ENCODE measurements at regions of chr11 and their contacts with region 1.

Region 1: DNA sequence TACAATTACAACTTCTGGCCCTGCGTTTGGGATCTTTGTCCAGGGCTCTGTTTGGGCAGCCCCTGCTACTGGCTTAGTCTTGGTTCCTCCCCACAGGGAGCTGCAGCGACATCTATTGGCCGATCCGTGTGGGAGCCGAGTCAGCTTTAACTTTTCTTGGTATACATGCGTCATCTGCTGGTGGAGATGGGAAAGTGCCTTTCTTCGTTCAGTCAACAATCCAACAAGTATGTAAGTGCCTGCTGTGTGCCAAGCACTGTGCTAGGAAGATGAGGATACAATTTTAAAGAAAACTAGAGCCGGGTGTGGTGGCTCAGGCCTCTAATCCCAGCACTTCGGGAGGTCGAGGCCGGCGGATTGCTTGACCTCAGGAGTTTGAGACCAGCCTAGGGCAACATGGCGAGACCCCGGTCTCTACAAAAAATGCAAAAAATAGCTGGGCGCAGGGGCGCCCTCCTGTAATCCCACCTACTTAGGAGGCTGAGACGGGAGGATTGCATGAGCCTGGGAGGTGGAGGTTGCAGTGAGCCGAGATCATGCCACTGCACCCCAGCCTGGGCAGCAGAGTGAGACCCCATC is 8.2 kb downstream of the TPBGL start:
- DNase-seq: peak; percentile 87
- H3K4me3 Mint-ChIP-seq: no peak overlapping the region
- H3K27ac Mint-ChIP-seq: no peak overlapping the region
- H3K4me1 Mint-ChIP-seq: no peaks in the 10 kb centered on the region
- H3K27me3 Mint-ChIP-seq: peaks cover 85% of the 10 kb centered on the region
- CTCF ChIP-seq: peak; percentile 97

Region 2: GRCh38 chr11:74720596-74721478 is 527.9 kb before region 1 on chr11:
- CTCF ChIA-PET with region 1: no interaction called
- intact Hi-C with region 1: no loop called
- DNase-seq: no peak
- H3K4me3 Mint-ChIP-seq: no peak overlapping the region
- H3K27ac Mint-ChIP-seq: no peak overlapping the region
- H3K4me1 Mint-ChIP-seq: no peaks in the 10 kb centered on the region
- H3K27me3 Mint-ChIP-seq: peaks cover 79% of the 10 kb centered on the region
- CTCF ChIP-seq: no peak

Region 3: DNA sequence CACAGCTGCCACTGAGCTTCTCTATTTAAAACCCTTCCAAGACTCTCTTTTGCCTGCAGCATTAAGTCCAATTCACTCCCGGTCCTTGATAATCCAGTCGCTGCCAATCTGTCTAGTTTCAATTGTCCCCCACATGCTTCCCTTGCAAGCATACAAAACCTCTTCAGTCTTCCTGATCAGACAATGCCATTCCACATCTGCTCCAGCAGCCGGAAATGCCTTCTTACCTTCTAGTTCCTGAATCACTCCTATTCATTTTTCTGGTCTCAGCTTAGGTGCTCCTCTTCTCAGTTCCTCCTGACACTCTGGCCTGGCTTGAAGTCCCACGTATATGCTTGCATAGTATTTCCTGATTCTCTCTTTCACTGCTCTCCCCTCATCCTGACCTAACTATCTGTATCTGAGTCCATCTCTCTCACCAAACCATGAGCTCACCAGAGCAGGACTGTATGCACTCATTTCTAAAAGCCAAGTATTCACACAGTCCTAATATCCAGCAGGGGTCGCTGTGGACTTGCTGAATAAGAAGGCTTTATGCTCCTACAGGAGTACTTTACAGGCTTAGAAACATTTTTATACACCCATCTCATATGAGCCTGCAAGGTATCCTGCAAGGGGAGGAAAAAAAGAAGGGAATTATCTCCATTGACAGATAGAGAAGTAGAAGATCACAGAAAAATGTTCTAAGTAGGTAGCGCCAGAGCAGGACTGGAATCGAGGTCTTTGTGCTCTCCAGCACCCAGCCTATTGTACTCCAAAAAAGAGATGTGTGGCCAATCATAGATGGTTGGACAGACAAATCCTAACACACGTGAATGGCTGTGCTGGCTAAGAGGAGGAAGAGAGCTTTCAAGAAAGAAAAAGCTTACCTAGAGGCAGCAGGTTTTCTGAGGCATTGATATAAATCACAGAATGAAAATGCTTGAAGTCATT is 319.1 kb before region 1 on chr11:
- CTCF ChIA-PET with region 1: interaction called, 16 read pairs
- intact Hi-C with region 1: loop called (anchors 2 kb)
- DNase-seq: peak; percentile 68
- H3K4me3 Mint-ChIP-seq: no peak overlapping the region
- H3K27ac Mint-ChIP-seq: no peak overlapping the region
- H3K4me1 Mint-ChIP-seq: no peaks in the 10 kb centered on the region
- H3K27me3 Mint-ChIP-seq: no peaks in the 10 kb centered on the region
- CTCF ChIP-seq: peak; percentile 63

Region 4: DNA sequence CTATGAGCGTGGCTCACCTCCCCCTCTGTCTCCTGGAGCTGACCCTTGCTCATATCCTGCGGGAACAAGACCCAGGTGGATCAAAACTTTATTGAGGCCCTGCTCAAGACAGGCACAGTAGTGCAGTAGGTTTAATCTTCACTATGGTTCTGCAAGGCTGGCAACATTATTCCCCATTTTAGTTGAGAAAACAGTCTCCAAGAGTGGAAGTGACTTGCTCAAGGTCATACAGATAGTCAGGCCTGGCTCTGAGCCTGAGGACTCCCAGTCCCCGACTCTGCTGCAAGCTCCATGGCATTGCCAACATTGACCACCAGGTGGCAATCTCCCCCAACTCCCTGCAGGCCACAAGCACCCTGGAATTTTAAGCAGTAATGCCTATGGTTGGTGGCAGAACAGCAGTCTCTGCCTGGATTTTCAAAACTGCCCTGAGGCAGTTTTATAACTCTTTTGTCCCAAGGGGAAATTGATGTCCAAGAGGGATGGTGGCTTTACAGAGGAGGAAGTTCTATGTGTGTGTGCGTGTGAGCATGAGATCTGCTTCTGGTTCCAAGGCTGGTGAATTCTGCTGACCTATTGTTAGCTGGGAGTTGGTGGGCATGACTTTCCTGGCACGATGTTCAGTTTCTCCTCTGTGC is 225.9 kb before region 1 on chr11:
- CTCF ChIA-PET with region 1: interaction called, 19 read pairs
- intact Hi-C with region 1: loop called (anchors 2 kb)
- DNase-seq: peak; percentile 88
- H3K4me3 Mint-ChIP-seq: no peak overlapping the region
- H3K27ac Mint-ChIP-seq: no peak overlapping the region
- H3K4me1 Mint-ChIP-seq: peaks cover 8% of the 10 kb centered on the region
- H3K27me3 Mint-ChIP-seq: no peaks in the 10 kb centered on the region
- CTCF ChIP-seq: peak; percentile 97

Region 5: GRCh38 chr11:75142714-75143419 is 105.9 kb before region 1 on chr11:
- CTCF ChIA-PET with region 1: interaction called, 37 read pairs
- intact Hi-C with region 1: loop called (anchors 1 kb)
- DNase-seq: peak; percentile 54
- H3K4me3 Mint-ChIP-seq: no peak overlapping the region
- H3K27ac Mint-ChIP-seq: peak overlapping the region; percentile 24
- H3K4me1 Mint-ChIP-seq: peaks cover 13% of the 10 kb centered on the region
- H3K27me3 Mint-ChIP-seq: peaks cover 32% of the 10 kb centered on the region
- CTCF ChIP-seq: no peak

Region 6: GRCh38 chr11:75214411-75214821 is 34.4 kb before region 1 on chr11:
- CTCF ChIA-PET with region 1: interaction called, 9 read pairs
- intact Hi-C with region 1: loop called (anchors 1 kb)
- DNase-seq: peak; percentile 85
- H3K4me3 Mint-ChIP-seq: no peak overlapping the region
- H3K27ac Mint-ChIP-seq: no peak overlapping the region
- H3K4me1 Mint-ChIP-seq: no peaks in the 10 kb centered on the region
- H3K27me3 Mint-ChIP-seq: peaks cover 76% of the 10 kb centered on the region
- CTCF ChIP-seq: no peak